ENCODE measurements at regions of chr12 and their contacts with region 1.

Region 1: DNA sequence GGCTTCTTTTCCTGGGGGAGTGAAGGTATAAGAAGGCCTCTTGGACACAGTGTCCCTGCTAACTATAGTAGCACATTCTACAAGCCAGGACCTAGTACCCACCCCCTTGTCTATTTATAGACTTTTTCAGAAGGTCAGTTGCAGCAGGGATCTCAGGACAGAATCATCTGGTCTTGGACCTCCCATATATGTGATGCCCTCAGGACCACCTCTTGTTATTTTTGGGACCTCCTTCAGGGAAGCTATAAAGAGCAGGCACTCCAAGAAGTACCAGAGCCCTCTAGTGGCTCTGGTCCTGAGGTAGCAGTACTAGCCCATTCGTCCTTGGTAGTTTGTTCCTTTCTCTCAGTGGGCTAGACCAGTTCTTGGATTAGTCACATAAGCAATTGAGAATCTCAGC is 4.3 kb downstream of the COQ10A start:
- DNase-seq: no peak

Region 2: GRCh38 chr12:56257491-56258056 is 13.5 kb before region 1 on chr12:
- intact Hi-C with region 1: loop called in 1 of 2 experiments (anchors 1 kb)
- DNase-seq: no peak